ENCODE measurements at regions of chr19 and their contacts with region 1.

Region 1: GRCh38 chr19:4139614-4140236 is 13.7 kb upstream of the CREB3L3 start:
- DNase-seq: peak; percentile 93
- ATAC-seq: peak; percentile 95
- H3K4me3 Mint-ChIP-seq: peak overlapping the region; percentile 3
- H3K27ac Mint-ChIP-seq: no peak overlapping the region
- H3K4me1 Mint-ChIP-seq: peaks cover 11% of the 10 kb centered on the region
- H3K27me3 Mint-ChIP-seq: peaks cover 2% of the 10 kb centered on the region
- CTCF ChIP-seq: peak; percentile 56

Region 2: DNA sequence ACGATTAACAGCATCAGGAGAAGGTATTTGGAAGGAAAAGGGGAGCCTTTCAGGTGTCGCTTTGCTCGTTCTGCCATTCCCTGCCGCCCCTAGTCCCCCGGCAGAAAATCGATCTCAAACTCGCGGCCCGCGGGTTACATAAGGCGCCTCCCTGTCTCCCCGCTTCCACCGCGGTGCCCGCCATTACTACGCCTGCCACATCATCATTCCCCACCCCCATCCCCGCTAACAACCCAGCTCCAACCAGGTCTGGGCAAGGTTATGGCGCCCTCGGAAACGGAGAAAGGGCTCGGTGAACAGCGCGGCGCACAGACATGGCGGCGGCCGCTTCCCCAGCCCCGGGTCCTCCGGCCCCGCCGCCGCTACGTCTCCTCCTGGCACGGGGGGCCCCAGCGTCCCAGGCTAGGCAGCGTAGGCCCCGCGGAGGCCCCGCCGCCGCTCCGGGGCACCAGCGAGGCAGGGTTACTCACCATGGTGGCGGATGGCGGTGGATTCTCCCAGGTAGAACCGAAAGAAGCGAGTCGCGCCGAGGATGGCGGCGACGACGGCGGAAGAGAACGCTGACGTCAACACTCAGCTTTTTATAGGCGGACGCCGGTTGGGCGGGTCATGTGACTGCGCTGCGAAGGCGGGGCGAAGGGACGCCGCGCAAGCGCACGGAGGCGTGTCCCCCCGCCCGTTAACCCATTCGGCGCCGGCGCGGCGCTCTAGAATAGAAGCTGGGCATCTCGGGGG is 154.7 kb before region 1 on chr19 and contains the start of gene EEF2:
- CTCF ChIA-PET with region 1: interaction called, 17 read pairs
- POLR2A ChIA-PET with region 1: interaction called, 9 read pairs
- intact Hi-C with region 1: no loop called
- DNase-seq: peak; percentile 88
- ATAC-seq: peak; percentile 49
- H3K4me3 Mint-ChIP-seq: peak within 1 kb of the TSS; percentile 94
- H3K27ac Mint-ChIP-seq: peak within 1 kb of the TSS; percentile 95
- H3K4me1 Mint-ChIP-seq: peaks cover 46% of the 10 kb centered on the region
- H3K27me3 Mint-ChIP-seq: no peaks in the 10 kb centered on the region
- CTCF ChIP-seq: no peak
- total RNA-seq, gene EEF2: 3,533 to 3,625 TPM

Region 3: GRCh38 chr19:4058034-4058692 is 81.6 kb before region 1 on chr19:
- CTCF ChIA-PET with region 1: interaction called, 16 read pairs
- POLR2A ChIA-PET with region 1: no interaction called
- intact Hi-C with region 1: no loop called
- DNase-seq: peak; percentile 82
- ATAC-seq: peak; percentile 49
- H3K4me3 Mint-ChIP-seq: peak overlapping the region; percentile 44
- H3K27ac Mint-ChIP-seq: peak overlapping the region; percentile 90
- H3K4me1 Mint-ChIP-seq: peaks cover 48% of the 10 kb centered on the region
- H3K27me3 Mint-ChIP-seq: no peaks in the 10 kb centered on the region
- CTCF ChIP-seq: no peak

Region 4: GRCh38 chr19:4115050-4115817 is 24.5 kb before region 1 on chr19:
- CTCF ChIA-PET with region 1: interaction called, 17 read pairs
- POLR2A ChIA-PET with region 1: interaction called, 3 read pairs
- intact Hi-C with region 1: no loop called
- DNase-seq: peak; percentile 85
- ATAC-seq: peak; percentile 96
- H3K4me3 Mint-ChIP-seq: peak overlapping the region; percentile 8
- H3K27ac Mint-ChIP-seq: peak overlapping the region; percentile 73
- H3K4me1 Mint-ChIP-seq: peaks cover 36% of the 10 kb centered on the region
- H3K27me3 Mint-ChIP-seq: no peaks in the 10 kb centered on the region
- CTCF ChIP-seq: no peak

Region 5: DNA sequence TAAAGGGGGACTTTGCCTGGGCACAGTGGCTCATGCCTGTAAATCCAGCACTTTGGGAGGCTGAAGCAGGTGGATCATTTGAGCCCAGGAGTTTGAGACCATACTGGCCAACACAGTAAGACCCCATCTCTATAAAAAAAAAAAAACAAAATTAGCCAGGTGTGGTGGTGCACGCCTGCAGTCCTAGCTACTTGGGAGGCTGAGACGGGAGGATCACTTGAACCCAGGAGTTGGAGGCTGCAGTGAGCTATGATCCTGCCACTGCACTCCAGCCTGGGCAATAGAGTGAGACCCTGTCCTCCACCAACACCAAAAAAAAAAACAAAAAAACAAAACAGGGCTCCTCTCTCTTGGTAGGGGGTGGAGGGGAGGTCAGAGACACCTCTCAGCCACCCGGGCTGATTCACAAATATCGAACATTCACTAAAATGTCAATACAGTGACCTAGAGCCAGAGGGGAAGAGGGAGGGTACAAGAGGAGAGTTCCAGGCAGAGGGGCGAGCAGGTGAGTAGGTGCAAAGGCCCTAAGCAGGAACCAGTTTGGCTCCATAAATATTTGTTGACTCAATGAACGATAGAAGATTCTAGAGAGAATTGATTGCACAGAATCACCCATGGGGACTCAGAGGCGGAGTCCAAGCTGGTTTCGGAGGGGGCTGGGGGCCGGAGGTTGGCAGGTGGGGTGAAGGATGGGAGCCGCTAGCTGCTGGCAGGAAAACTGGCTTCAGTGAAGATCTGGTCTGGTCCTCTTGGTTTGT is 12.7 kb after region 1 on chr19:
- CTCF ChIA-PET with region 1: interaction called, 25 read pairs
- POLR2A ChIA-PET with region 1: no interaction called
- intact Hi-C with region 1: no loop called
- DNase-seq: no peak
- ATAC-seq: no peak
- H3K4me3 Mint-ChIP-seq: no peak overlapping the region
- H3K27ac Mint-ChIP-seq: no peak overlapping the region
- H3K4me1 Mint-ChIP-seq: peaks cover 5% of the 10 kb centered on the region
- H3K27me3 Mint-ChIP-seq: peaks cover 2% of the 10 kb centered on the region
- CTCF ChIP-seq: no peak

Region 6: DNA sequence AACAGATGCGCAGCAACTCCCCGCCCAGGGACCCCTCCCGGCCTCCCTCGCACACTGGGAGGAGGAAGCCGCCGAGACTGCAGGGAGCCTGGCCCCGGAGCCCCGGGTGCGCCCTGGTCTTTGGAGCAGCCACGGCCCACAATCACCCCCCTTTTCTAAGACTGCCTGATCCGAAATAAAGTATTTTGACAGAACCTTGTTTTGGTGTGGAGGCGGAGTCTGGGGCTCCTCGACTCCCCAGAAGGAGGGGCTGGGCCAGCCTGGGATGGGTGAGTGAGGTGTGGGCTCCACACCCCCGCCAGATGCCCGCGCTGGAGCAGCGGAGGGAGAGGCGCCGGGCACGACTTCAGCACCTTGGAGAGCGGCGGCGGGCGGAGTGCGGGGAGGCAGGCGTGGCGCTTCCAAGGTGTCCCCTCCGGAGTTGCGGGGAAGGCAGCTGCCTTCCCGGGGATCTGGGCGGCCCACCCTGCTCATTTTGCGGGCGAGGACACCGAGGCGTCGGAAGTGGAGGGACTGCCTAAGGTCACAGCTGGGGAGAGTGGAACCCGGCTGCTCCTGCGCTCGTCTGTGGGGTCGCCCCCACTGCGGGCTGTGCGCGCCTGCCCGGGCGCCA is 33.2 kb after region 1 on chr19:
- CTCF ChIA-PET with region 1: interaction called, 13 read pairs
- POLR2A ChIA-PET with region 1: no interaction called
- intact Hi-C with region 1: no loop called
- DNase-seq: peak; percentile 65
- ATAC-seq: peak; percentile 82
- H3K4me3 Mint-ChIP-seq: no peak overlapping the region
- H3K27ac Mint-ChIP-seq: no peak overlapping the region
- H3K4me1 Mint-ChIP-seq: peaks cover 3% of the 10 kb centered on the region
- H3K27me3 Mint-ChIP-seq: peaks cover 14% of the 10 kb centered on the region
- CTCF ChIP-seq: no peak